ENCODE measurements at regions of chr13 and their contacts with region 1.

Region 1: GRCh38 chr13:19766213-19766990 is 16.3 kb downstream of the PSPC1 start:
- DNase-seq: no peak
- ATAC-seq: no peak; the same call in 2 of the 3 replicates
- H3K4me3 ChIP-seq: no peak overlapping the region
- H3K27ac ChIP-seq: no peak overlapping the region
- H3K4me1 ChIP-seq: no peaks in the 10 kb centered on the region
- H3K27me3 ChIP-seq: no peaks in the 10 kb centered on the region
- CTCF ChIP-seq: no peak
- EP300 ChIP-seq: no peak
- POLR2A ChIP-seq: no peak
- RAD21 ChIP-seq: no peak

Region 2: DNA sequence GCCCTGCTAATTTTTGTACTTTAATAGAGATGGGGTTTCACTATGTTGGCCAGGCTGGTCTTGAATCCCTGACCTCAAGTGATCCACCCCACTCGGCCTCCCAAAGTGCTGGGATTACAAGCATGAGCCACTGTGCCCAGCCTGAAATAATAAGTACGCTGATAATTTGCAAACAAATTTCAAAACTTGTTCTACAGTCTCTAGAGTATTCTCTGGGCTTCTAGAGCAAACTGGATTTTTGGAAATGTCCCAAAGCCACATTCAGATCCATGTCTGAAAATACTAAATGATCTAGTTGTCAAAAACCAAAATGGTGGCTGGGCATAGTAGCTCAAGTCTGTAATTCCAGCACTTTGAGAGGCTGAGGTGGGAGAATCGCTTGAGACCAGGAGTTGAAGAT is 56.3 kb after region 1 on chr13:
- CTCF ChIA-PET with region 1: no interaction called
- POLR2A ChIA-PET with region 1: no interaction called
- RAD21 ChIA-PET with region 1: no interaction called
- SMC1A ChIA-PET with region 1: no interaction called
- in situ Hi-C with region 1: no loop called
- intact Hi-C with region 1: loop called (anchors 10 kb)
- DNase-seq: no peak
- ATAC-seq: no peak
- H3K4me3 ChIP-seq: no peak overlapping the region
- H3K27ac ChIP-seq: no peak overlapping the region
- H3K4me1 ChIP-seq: no peaks in the 10 kb centered on the region
- H3K27me3 ChIP-seq: no peaks in the 10 kb centered on the region
- CTCF ChIP-seq: no peak
- EP300 ChIP-seq: no peak
- POLR2A ChIP-seq: no peak
- RAD21 ChIP-seq: no peak

Region 3: DNA sequence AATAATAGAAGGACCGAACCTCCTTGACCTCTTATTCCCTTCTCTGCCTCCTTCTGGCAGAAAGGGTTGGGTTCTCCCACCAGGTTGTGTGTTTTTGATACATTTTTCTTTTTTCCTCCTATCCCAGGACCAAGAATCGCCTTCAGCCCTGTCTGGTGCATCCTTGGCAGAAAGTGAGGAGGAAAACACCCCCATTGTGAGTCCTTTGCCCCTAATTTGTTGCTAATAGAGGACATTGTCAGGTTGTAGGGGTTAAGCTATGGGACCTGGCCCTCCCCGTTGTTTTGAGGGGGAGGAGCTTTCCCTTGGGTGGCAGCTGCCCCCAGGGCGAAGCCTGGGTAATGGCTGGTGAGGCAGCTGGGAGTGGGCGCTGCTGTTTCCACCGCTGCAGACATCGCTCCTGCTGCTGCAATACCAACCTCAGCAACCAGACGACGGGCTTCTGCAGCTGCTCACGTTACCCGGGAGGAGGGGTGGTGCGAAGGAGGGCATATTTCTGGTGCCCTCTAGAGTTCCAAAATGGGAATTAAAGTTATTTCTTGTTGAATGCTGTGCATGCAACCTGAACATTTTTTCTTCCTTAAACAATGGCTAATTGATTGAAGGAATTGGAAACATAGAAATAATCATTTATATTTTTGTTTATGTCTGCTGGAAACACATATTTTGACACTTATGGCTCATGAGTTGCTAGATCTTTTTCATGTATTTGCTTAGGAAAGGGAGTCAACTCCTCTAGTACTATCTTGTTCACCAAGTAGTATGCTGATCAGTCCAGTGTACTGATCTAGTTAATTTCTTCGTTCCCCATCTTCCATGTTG is 193.6 kb after region 1 on chr13:
- CTCF ChIA-PET with region 1: interaction called, 3 read pairs
- POLR2A ChIA-PET with region 1: no interaction called
- RAD21 ChIA-PET with region 1: no interaction called
- SMC1A ChIA-PET with region 1: no interaction called
- in situ Hi-C with region 1: no loop called
- intact Hi-C with region 1: loop called (anchors 10 kb)
- DNase-seq: peak; percentile 68
- ATAC-seq: peak; percentile 65
- H3K4me3 ChIP-seq: peak overlapping the region; percentile 81
- H3K27ac ChIP-seq: peak overlapping the region; percentile 80
- H3K4me1 ChIP-seq: no peaks in the 10 kb centered on the region
- H3K27me3 ChIP-seq: no peaks in the 10 kb centered on the region
- CTCF ChIP-seq: peak; percentile 89 to 92 (median 90)
- EP300 ChIP-seq: no peak; a peak in 1 of 4 replicates
- POLR2A ChIP-seq: peak; percentile 70
- RAD21 ChIP-seq: peak; percentile 53

Measured in GM12878 (cell line).